Activated B cell treated with CpG ODN at 0.5 μM for 24 hours (primary cell): ENCODE measurements at regions of chr1 and their contacts with region 1.

Region 1: DNA sequence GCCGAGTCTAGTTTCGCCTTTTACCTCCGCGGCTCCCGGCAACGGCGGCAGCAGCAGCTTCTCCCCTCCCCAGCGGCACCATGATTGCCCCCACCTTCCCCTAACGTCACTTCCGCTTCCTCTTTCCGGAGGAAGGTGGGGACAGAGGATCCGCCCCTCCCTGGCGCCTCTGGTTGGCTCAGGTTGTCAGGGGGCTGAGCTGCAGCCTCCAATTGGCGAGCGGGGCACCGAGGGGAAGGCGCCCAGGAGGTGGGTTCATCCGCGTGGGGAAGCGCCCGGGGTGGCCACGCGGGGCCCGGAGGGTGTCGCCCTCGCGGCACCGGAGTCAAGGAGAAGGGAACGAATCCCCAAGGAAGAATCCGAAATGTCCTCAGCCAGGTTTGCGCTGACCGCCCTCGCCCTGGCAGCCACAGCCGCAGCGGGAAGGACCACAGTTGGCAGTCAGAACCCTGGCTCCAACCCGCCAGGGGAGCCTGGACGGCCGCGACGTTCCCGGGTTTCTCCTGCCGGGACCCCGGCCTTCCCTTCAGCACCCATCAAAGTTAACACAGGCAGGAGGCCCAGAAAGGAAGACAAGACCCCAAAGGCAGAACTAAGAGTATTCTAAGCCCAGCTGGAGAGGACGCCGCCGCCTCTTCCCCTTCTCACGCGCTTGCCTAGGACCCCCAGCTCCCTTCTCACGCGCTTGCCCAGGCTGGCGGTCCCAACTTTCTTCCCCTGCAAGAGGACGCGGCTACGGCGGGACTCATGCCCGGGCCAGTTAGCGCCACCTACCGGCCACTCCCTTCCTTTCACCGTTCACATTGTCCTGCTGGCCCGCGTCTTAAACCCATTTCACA is at the start of gene MTF1:
- DNase-seq: peak; percentile 88
- ATAC-seq: peak; percentile 98
- H3K4me3 Mint-ChIP-seq: peak within 1 kb of the TSS; percentile 93
- H3K27ac Mint-ChIP-seq: peak within 1 kb of the TSS; percentile 89
- H3K4me1 Mint-ChIP-seq: peaks cover 29% of the 10 kb centered on the region
- H3K27me3 Mint-ChIP-seq: no peaks in the 10 kb centered on the region
- CTCF ChIP-seq: peak; percentile 19
- total RNA-seq, gene MTF1: 30.5 and 36.2 TPM in 2 replicates

Region 2: DNA sequence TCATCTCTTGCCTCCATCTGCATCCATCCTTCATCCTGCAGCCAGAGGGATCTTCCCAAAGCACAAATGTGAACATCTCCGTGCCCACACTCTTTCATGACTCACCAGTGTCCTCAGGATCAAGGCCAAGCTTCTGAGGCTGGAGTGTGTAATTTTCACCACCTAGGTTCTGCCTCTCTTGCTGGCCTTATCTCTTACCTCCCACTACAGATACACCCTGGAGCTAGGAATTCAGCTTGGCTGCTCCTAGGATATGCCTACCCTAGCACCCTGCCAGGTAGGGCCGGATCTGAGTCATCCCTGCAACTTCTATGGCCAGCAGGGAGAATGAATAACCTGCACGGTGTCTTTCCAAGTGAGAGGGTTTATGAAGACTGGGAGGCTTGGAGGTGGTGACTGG is 1168.4 kb before region 1 on chr1:
- CTCF ChIA-PET with region 1: no interaction called
- POLR2A ChIA-PET with region 1: no interaction called
- intact Hi-C with region 1: no loop called
- DNase-seq: no peak
- ATAC-seq: no peak
- H3K4me3 Mint-ChIP-seq: no peak overlapping the region
- H3K27ac Mint-ChIP-seq: no peak overlapping the region
- H3K4me1 Mint-ChIP-seq: no peaks in the 10 kb centered on the region
- H3K27me3 Mint-ChIP-seq: peaks cover 33% of the 10 kb centered on the region
- CTCF ChIP-seq: no peak

Region 3: DNA sequence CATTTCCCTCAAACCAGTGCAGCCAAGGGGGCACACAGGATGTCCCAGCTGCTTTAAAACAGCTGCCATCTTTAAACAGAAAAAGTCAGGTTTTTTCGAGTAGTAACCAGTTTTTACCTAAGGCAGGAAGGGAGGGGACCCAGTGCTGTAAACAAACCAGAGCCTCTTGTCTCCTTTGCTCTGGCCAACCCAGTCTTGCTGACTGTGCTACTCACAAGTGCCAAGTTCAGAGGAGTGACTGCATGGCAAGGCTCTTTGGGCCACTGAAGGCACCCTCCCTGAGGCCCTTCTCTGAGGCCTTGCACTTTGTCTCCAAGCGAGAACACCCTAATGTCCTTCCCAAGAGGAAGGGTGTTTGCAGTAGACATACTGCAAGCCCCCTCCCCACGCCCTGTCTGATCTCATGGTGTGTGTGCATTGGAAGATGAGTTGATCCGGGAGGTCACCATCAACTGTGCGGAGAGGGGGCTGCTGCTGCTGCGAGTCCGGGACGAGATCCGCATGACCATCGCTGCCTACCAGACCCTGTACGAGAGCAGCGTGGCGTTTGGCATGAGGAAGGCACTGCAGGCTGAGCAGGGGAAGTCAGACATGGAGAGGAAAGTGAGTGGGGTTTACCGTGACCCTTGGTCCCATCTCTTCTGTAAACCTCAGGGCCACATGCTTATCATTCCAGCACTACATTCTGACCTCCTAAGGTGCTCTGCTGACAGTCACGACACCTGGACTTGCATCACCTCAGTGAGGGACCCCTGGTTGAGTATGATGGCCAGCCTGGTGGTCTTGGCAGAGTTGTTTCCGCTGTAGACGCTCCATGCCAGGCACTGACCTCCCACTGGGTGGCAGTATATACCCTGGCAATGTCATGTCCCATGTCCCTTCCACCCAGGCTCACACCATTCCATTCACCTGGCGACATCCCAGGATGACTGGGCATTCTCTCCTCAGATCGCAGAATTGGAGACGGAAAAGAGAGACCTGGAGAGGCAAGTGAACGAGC is 298.3 kb before region 1 on chr1:
- CTCF ChIA-PET with region 1: no interaction called
- POLR2A ChIA-PET with region 1: no interaction called
- intact Hi-C with region 1: loop called (anchors 1 kb)
- DNase-seq: no peak
- ATAC-seq: peak; percentile 34
- H3K4me3 Mint-ChIP-seq: no peak overlapping the region
- H3K27ac Mint-ChIP-seq: no peak overlapping the region
- H3K4me1 Mint-ChIP-seq: no peaks in the 10 kb centered on the region
- H3K27me3 Mint-ChIP-seq: peaks cover 7% of the 10 kb centered on the region
- CTCF ChIP-seq: no peak

Region 4: DNA sequence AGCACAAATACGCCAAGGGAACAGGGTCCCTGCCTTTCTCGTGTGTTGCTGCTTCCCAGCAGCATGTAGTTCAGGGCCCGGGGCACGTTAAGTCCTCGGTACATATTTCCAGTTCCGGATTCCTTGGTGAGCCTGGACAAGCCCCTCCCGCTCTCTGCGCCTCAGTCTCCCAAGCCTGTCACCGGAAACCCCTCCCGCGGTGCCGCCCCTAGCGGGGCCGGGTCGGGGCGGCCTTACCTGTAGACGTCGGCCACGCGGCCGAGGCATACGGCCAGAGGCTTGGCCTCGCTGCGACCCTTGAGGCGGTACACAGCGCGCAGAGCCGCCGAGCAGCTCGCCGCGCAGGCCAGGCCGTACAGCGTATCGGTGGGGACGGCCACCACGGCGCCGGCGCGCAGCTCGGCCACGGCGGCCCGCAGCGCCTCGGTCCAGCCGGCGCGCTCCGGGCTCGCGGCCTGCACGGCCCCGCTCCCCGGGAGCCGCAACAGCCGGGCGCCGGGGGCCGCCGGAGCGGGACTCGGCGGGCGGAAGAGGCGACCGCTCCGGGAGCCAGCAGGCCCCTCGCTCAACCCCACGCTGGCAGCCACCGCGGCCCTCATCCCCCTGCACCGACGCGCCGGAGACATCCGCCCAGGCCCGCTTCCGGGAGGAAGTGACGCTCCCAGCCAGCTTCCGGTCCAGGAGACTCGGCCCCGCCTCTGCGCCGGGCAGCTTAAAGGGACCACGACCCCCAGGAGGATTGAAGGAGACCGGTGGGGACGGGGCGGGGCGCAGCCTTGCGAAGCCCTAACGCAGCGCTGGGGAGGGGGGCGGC is 52.0 kb before region 1 on chr1 and contains the starts of genes C1orf122 and YRDC:
- CTCF ChIA-PET with region 1: interaction called, 10 read pairs
- POLR2A ChIA-PET with region 1: interaction called, 43 read pairs
- intact Hi-C with region 1: loop called (anchors 1 kb)
- DNase-seq: peak; percentile 93
- ATAC-seq: peak; percentile 89
- H3K4me3 Mint-ChIP-seq: peak within 1 kb of the TSS; percentile 95
- H3K27ac Mint-ChIP-seq: peak within 1 kb of the TSS; percentile 92
- H3K4me1 Mint-ChIP-seq: peaks cover 45% of the 10 kb centered on the region
- H3K27me3 Mint-ChIP-seq: no peaks in the 10 kb centered on the region
- CTCF ChIP-seq: no peak
- total RNA-seq, gene C1orf122: 18.8 and 19.9 TPM in 2 replicates
- total RNA-seq, gene YRDC: 20.6 and 24.2 TPM in 2 replicates

Region 5: GRCh38 chr1:37846647-37847339 is 12.9 kb before region 1 on chr1:
- CTCF ChIA-PET with region 1: interaction called, 10 read pairs
- POLR2A ChIA-PET with region 1: interaction called, 11 read pairs
- intact Hi-C with region 1: no loop called
- DNase-seq: no peak
- ATAC-seq: no peak
- H3K4me3 Mint-ChIP-seq: peak overlapping the region; percentile 73
- H3K27ac Mint-ChIP-seq: peak overlapping the region; percentile 67
- H3K4me1 Mint-ChIP-seq: peaks cover 32% of the 10 kb centered on the region
- H3K27me3 Mint-ChIP-seq: no peaks in the 10 kb centered on the region
- CTCF ChIP-seq: no peak

Region 6: DNA sequence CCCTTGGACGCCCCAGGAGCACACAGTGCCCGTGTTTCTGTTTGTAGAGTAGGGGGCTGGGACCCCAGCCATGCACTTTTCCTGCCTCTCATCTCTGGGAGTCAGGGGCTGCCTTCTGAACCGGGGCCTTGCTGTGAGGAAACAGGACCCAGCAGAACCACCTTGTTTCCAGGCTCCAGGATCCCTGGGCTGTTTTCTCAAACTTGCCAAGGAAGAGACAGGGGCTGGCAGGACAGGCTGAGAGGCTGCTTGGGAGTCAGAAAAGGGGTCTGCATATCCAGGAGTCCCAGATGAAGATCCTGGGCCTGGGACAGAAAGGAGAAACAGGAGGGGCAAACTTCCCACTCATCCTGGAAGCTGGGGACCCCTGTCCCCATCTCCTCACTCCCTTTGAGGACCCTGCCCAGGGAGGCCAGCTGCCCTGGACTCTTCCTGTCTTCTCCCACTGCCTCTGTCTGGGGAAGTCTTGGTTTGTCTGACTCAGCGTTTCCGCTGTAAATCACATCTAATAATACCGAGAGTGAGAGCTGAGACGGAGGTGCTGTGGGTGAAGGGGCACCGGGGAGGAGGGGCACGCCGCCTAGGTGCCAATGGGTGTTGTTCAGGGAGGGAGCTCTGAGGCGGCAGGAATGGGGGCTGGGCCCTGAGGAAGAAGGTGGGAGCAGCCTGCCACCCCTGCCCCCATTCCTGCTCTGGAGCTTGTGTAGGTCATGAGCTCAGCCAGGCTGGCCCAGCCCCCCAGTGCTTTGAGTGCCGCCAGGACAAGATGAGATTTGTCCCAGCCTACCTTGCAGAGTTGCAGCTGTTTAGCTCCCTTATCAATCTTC is 170.2 kb after region 1 on chr1:
- CTCF ChIA-PET with region 1: no interaction called
- POLR2A ChIA-PET with region 1: no interaction called
- intact Hi-C with region 1: no loop called
- DNase-seq: peak; percentile 33
- ATAC-seq: peak; percentile 64
- H3K4me3 Mint-ChIP-seq: peak overlapping the region; percentile 35
- H3K27ac Mint-ChIP-seq: peak overlapping the region; percentile 50
- H3K4me1 Mint-ChIP-seq: peaks cover 39% of the 10 kb centered on the region
- H3K27me3 Mint-ChIP-seq: no peaks in the 10 kb centered on the region
- CTCF ChIP-seq: no peak

Region 7: GRCh38 chr1:38166473-38166872 is 306.7 kb after region 1 on chr1:
- CTCF ChIA-PET with region 1: no interaction called
- POLR2A ChIA-PET with region 1: no interaction called
- intact Hi-C with region 1: no loop called
- DNase-seq: no peak
- ATAC-seq: no peak
- H3K4me3 Mint-ChIP-seq: no peak overlapping the region
- H3K27ac Mint-ChIP-seq: no peak overlapping the region
- H3K4me1 Mint-ChIP-seq: peaks cover 3% of the 10 kb centered on the region
- H3K27me3 Mint-ChIP-seq: peaks cover 4% of the 10 kb centered on the region
- CTCF ChIP-seq: no peak